Common myeloid progenitor, CD34-positive (primary cell): ENCODE measurements at regions of chr3 and their contacts with region 1.

Region 1: DNA sequence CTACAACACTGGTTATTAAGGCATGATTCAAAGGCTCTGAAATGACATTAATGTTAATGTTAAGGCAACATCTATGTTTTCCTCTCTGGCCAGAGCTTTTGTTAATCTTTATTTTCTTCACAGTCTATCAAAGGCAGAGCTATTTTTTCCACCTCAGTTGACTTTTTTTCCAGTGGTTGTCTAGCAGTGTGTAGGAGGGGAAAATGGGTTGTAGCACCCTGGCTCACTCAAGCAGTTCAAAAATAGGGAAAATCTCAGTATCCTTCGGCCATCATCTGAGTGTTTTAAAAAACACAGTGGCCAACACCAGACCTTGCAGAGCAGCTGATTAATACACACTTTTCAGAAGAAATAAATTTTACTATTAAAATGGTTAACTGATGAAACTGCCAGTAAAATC is 21.4 kb downstream of the CBLB start:
- DNase-seq: no peak
- H3K4me3 ChIP-seq: no peak overlapping the region
- H3K27ac ChIP-seq: no peak overlapping the region
- H3K4me1 ChIP-seq: no peaks in the 10 kb centered on the region
- H3K27me3 ChIP-seq: no peaks in the 10 kb centered on the region

Region 2: DNA sequence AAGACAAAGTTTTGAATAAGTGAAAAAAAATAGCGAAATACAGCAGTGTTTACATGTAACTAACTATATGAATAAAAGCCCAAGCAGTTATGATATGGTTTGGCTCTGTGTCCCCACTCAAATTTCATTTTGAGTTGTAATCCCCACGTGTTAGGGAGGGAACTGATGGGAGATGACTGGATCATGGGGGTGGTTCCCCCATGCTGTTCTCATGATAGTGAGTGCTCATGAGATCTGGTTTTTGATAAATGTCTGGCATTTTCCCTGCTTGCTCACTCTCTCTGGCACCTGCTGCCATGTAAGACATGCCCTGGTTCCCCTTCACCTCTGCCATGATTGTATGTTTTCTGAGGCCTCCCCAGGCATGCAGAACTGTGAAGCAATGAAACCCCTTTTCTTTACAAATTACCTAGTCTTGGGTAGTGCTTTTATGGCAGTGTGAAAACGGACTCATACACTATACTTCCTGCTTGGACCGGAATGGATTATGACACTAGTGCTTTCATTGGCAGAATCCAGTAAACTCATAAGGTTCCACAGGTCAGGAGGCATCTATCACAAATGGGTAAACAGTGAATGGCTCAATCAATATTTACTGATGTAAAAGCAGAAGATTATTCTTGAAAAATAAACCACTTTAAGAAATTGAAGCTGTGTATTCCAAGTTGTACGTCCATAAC is 170.7 kb before region 1 on chr3:
- CTCF ChIA-PET with region 1: no interaction called
- POLR2A ChIA-PET with region 1: no interaction called
- DNase-seq: no peak
- H3K4me3 ChIP-seq: no peak overlapping the region
- H3K27ac ChIP-seq: no peak overlapping the region
- H3K4me1 ChIP-seq: no peaks in the 10 kb centered on the region
- H3K27me3 ChIP-seq: no peaks in the 10 kb centered on the region

Region 3: DNA sequence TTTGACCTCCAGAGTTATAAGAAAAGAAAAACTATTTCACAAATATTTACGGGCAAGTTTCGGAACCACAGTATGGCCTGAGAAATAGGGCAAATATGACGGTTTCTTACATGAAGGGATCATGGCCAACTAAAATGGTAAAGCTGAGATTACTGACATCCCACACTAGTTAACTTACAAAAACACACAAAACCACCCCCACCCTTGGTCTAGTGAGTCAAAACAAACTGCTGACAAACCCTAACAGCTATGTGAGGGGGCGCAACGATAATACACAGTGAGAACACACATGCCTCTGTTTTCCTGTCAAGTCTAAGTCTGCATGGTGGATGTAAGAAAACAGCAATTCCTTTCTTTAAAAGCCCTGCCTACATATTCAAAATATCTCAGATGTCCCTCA is 10.9 kb before region 1 on chr3:
- CTCF ChIA-PET with region 1: interaction called, 10 read pairs
- POLR2A ChIA-PET with region 1: no interaction called
- DNase-seq: no peak
- H3K4me3 ChIP-seq: no peak overlapping the region
- H3K27ac ChIP-seq: no peak overlapping the region
- H3K4me1 ChIP-seq: no peaks in the 10 kb centered on the region
- H3K27me3 ChIP-seq: no peaks in the 10 kb centered on the region